ENCODE measurements at regions of chr3 and their contacts with region 1.

Region 1: DNA sequence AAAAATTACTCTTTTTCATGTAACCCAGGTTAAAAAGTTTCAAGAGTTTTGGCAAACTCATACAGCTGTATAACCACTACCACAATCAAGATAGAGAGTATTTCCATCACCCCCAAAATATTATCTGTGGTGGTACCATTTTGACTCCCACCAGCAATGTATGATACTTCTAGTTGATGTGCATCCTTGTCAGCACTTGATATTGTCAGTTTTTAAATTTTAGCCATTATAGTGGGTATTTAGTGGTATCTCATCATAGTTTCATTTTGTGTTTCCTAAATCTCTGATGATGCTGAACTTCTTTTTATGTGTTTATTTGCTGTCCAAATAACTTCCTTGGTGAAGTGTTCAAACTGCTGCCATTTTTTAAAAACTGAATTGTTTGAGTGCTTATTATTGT is 14.6 kb downstream of the CTDSPL start:
- DNase-seq: no peak
- H3K4me3 Mint-ChIP-seq: no peak overlapping the region
- H3K27ac Mint-ChIP-seq: no peak overlapping the region
- H3K4me1 Mint-ChIP-seq: peaks cover 3% of the 10 kb centered on the region
- H3K27me3 Mint-ChIP-seq: peaks cover 6% of the 10 kb centered on the region

Region 2: GRCh38 chr3:36804295-36805055 is 1071.8 kb before region 1 on chr3:
- intact Hi-C with region 1: loop called (anchors 5 kb)
- DNase-seq: no peak
- H3K4me3 Mint-ChIP-seq: no peak overlapping the region
- H3K27ac Mint-ChIP-seq: no peak overlapping the region
- H3K4me1 Mint-ChIP-seq: no peaks in the 10 kb centered on the region
- H3K27me3 Mint-ChIP-seq: peaks cover 27% of the 10 kb centered on the region

Measured in activated CD4-positive, alpha-beta T cell treated with anti-CD3 and anti-CD28 coated beads, Interleukin-2, amount 10 ng/mL, durations not matched to agents 24 days and 14 days (primary cell).